CD4-positive, alpha-beta T cell (primary cell): ENCODE measurements at regions of chr11 and their contacts with region 1.

Region 1: DNA sequence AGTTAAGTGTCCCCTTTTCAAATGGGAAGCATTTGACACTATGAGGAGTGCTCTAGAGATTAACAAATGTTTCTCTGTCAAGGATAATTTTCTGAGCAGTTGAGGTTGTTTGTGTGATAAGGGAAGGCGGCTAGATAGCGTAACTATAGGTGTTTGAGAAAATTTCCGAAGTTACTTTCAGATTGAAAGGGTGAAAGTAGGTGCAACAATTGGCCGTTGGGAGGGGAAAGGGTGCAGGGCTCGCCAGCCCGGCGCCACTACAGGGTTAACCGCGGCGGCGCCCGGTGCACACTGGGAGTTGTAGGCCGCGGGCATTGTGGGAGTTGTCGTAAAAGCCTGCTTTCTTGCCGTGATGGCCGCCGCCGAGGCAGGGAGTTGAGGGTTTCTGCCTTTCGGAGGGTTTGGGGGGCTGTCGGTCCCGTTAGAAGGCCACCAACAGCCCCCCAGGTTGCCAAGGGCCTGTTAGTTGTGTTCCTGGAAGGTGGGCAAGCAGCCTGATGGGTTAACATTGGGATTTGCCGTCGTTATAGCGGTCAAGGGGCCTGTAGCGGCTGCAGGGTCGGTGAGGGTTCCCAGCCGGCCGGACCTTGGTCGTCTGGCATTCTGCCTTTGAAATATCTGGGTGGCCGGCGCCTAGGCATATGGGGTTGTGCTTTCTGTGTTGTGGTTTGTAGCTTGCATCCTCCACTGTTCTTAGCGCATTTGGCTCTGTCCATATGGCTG is 36.5 kb upstream of the HSD17B12 start:
- DNase-seq: peak; percentile 73 to 91 (median 80)
- ATAC-seq: peak; percentile 99
- H3K4me3 ChIP-seq: peak overlapping the region; percentile 85
- H3K4me3 Mint-ChIP-seq: peak overlapping the region; percentile 91
- H3K27ac ChIP-seq: peak overlapping the region in 1 of 2 donors; percentile 23
- H3K27ac Mint-ChIP-seq: peak overlapping the region; percentile 82
- H3K4me1 ChIP-seq: peaks cover 9% of the 10 kb centered on the region
- H3K4me1 Mint-ChIP-seq: peaks cover 22% of the 10 kb centered on the region
- H3K27me3 ChIP-seq: peaks cover 10 to 13% of the 10 kb centered on the region in 2 experiments
- H3K27me3 Mint-ChIP-seq: peaks cover 18% of the 10 kb centered on the region
- CTCF ChIP-seq: no peak

Region 2: GRCh38 chr11:43632171-43632570 is 11.9 kb before region 1 on chr11:
- CTCF ChIA-PET with region 1: no interaction called
- POLR2A ChIA-PET with region 1: no interaction called
- intact Hi-C with region 1: no loop called
- DNase-seq: no peak
- ATAC-seq: no peak
- H3K4me3 ChIP-seq: no peak overlapping the region
- H3K4me3 Mint-ChIP-seq: no peak overlapping the region
- H3K27ac ChIP-seq: no peak overlapping the region
- H3K27ac Mint-ChIP-seq: no peak overlapping the region
- H3K4me1 ChIP-seq: no peaks in the 10 kb centered on the region
- H3K4me1 Mint-ChIP-seq: no peaks in the 10 kb centered on the region
- H3K27me3 ChIP-seq: peaks cover 4 to 46% of the 10 kb centered on the region in 2 experiments
- H3K27me3 Mint-ChIP-seq: peaks cover 81% of the 10 kb centered on the region
- CTCF ChIP-seq: no peak

Region 3: DNA sequence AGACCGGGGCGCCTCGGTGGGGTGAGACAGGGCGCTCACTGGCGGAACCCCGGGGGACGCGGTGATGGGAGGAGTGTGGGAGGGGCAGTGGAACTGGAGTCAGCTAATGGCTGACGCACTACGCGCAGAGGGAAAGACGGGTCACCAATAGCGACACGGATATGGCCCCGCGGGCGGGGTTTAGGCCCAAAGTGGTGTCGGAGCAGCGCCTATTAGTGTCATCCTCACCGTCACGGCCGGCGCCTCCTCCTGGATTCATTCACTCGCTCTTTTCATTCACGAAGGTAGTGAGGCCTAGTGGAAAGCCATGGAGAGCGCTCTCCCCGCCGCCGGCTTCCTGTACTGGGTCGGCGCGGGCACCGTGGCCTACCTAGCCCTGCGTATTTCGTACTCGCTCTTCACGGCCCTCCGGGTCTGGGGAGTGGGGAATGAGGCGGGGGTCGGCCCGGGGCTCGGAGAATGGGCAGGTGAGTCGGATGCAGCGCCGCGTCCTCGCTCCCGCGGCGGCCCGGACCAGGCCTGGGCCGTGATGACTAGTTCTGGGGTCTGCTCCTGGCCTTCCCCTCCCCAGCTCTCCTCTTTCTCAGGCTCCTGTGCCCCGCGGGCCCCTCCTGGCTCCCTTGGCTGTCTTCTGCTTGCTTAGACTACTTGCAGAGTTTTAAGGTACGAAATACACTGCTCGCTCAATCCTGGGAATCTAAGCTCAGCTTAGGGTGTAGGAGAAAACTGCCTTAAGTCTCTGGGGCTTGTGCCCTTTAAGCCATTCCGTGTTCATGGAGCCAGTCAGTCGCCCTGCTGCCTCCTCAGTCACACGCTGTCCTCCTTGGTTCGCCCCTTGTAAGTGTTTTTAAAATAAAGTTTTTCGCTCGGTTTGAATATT is 36.7 kb after region 1 on chr11 and contains the start of gene HSD17B12:
- CTCF ChIA-PET with region 1: interaction called, 6 read pairs
- POLR2A ChIA-PET with region 1: interaction called, 8 read pairs
- intact Hi-C with region 1: loop called (anchors 1 kb)
- DNase-seq: peak; percentile 95 to 99 (median 98)
- ATAC-seq: peak; percentile 92
- H3K4me3 ChIP-seq: peak within 1 kb of the TSS; percentile 91
- H3K4me3 Mint-ChIP-seq: peak within 1 kb of the TSS; percentile 96
- H3K27ac ChIP-seq: peak within 1 kb of the TSS; percentile 67 to 93
- H3K27ac Mint-ChIP-seq: peak within 1 kb of the TSS; percentile 96
- H3K4me1 ChIP-seq: peaks cover 18% of the 10 kb centered on the region
- H3K4me1 Mint-ChIP-seq: peaks cover 48% of the 10 kb centered on the region
- H3K27me3 ChIP-seq: no peaks in the 10 kb centered on the region
- H3K27me3 Mint-ChIP-seq: no peaks in the 10 kb centered on the region
- CTCF ChIP-seq: no peak
- total RNA-seq, gene HSD17B12: 16.1 to 16.3 TPM

Region 4: DNA sequence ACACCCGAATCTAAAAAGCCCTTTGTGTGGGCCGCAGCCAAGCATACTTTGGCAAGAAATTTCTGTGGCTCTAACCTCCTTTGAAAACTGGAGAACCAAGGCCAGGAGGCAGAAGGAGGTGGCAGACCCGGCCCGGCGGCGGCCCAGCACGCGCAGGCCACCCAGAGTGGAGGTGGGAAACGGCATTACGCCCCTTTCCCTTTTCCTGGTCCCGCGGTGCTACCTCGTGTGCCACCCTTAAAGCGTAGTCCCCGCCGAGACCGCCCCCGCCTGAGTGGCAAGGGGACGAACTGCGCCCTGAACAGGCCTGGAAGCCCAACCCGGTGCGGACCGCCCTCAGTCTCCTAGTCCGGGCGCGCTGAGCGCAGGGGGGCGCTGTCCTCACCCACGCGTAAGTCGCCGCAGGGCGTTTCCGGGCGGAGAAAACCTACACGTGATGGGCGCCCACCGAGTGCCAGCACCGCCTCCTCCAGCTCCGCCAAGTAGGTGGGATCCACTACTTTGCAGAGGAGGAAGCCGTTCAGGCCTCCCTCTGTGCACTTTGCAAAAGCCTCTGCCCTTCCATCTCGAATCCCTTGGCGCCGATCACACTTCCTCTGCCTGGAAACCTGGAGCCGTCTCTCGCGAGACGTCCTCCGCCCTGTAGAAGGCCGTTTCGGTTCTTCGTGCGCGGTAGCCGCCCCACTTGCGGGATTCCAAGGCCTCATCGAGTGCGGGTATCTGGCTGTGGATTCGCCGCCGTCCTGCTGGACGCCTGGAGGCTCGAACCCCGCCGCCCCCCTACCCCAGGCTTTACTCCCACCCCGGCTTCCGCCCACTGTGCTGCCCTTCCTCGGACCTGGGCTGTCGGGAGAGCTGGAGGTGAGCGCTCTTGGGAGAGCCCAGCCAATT is 422.0 kb after region 1 on chr11 and contains the start of gene ACCS:
- CTCF ChIA-PET with region 1: no interaction called
- POLR2A ChIA-PET with region 1: no interaction called
- intact Hi-C with region 1: loop called in 1 of 2 experiments (anchors 10 kb)
- DNase-seq: peak; percentile 75 to 96 (median 86)
- ATAC-seq: peak; percentile 95
- H3K4me3 ChIP-seq: peak within 1 kb of the TSS; percentile 90
- H3K4me3 Mint-ChIP-seq: peak within 1 kb of the TSS; percentile 89
- H3K27ac ChIP-seq: peak within 1 kb of the TSS; percentile 59 to 65
- H3K27ac Mint-ChIP-seq: peak within 1 kb of the TSS; percentile 88
- H3K4me1 ChIP-seq: peaks cover 20% of the 10 kb centered on the region
- H3K4me1 Mint-ChIP-seq: peaks cover 30% of the 10 kb centered on the region
- H3K27me3 ChIP-seq: no peaks in the 10 kb centered on the region
- H3K27me3 Mint-ChIP-seq: no peaks in the 10 kb centered on the region
- CTCF ChIP-seq: peak; percentile 90
- total RNA-seq, gene ACCS: 17.7 to 18.7 TPM